ENCODE measurements at regions of chr10 and their contacts with region 1.

Region 1: GRCh38 chr10:22714479-22715289 is at the start of gene PIP4K2A:
- DNase-seq: peak; percentile 67
- ATAC-seq: peak; percentile 93
- H3K4me3 ChIP-seq: peak within 1 kb of the TSS; percentile 100
- H3K27ac ChIP-seq: peak within 1 kb of the TSS; percentile 93
- H3K4me1 ChIP-seq: no peaks in the 10 kb centered on the region; the same call in 1 of the 2 replicates
- H3K27me3 ChIP-seq: no peaks in the 10 kb centered on the region
- CTCF ChIP-seq: no peak
- POLR2A ChIP-seq: no peak
- RAD21 ChIP-seq: no peak
- total RNA-seq, gene PIP4K2A: 18.1 and 21.9 TPM in 2 replicates

Region 2: DNA sequence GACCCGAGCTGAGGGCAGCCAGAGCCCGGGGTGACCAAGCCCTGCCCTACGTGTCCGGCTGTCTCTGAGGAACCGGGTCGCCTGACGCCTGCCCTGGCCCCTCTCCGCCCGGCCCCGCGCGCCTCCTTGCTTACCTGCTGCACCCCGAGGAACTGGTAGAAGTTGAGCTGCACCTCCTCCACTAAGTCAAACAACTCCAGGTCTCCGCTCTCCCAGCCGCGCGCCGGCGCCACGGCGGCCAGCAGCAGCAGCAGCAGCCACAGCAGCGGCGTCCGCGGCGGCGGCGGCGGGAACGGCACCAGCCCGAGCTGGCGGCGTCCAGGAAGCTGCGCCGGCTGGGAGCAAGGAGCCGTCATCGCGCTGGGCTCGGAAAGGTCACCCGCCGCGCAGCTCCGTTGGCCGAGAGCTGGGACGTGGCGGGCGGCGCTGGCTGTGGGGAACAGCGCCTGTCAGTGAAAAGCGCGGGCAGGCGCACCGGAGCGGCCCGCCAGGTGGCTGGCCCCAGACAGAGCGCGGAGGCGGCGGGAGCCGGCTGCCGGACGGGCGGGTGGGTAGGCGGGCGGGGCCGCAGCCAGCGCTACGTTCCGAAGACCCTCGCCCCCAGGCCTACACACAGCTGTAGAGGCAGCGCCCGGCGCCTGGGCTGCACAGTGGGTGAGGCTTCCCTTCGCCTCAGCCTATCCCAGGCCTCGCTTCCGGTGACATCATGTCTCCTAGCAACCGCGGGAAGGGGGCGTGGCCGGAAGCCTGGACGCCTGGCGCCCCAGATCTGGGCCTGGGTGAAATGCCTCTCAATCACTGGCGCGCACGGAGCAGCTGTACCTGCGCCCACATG is 711.4 kb before region 1 on chr10 and contains the start of gene DNAJC1:
- CTCF ChIA-PET with region 1: no interaction called
- POLR2A ChIA-PET with region 1: no interaction called
- dilution Hi-C with region 1: no loop called
- in situ Hi-C with region 1: no loop called
- intact Hi-C with region 1: loop called (anchors 10 kb)
- DNase-seq: peak; percentile 90
- ATAC-seq: peak; percentile 99
- H3K4me3 ChIP-seq: peak within 1 kb of the TSS; percentile 69
- H3K27ac ChIP-seq: peak within 1 kb of the TSS; percentile 29
- H3K4me1 ChIP-seq: no peaks in the 10 kb centered on the region; the same call in 1 of the 2 replicates
- H3K27me3 ChIP-seq: no peaks in the 10 kb centered on the region; the same call in none of the 2 replicates
- CTCF ChIP-seq: no peak; the same call in 1 of the 2 replicates
- POLR2A ChIP-seq: peak; percentile 62
- RAD21 ChIP-seq: no peak
- total RNA-seq, gene DNAJC1: 13.3 and 22.8 TPM in 2 replicates

Region 3: DNA sequence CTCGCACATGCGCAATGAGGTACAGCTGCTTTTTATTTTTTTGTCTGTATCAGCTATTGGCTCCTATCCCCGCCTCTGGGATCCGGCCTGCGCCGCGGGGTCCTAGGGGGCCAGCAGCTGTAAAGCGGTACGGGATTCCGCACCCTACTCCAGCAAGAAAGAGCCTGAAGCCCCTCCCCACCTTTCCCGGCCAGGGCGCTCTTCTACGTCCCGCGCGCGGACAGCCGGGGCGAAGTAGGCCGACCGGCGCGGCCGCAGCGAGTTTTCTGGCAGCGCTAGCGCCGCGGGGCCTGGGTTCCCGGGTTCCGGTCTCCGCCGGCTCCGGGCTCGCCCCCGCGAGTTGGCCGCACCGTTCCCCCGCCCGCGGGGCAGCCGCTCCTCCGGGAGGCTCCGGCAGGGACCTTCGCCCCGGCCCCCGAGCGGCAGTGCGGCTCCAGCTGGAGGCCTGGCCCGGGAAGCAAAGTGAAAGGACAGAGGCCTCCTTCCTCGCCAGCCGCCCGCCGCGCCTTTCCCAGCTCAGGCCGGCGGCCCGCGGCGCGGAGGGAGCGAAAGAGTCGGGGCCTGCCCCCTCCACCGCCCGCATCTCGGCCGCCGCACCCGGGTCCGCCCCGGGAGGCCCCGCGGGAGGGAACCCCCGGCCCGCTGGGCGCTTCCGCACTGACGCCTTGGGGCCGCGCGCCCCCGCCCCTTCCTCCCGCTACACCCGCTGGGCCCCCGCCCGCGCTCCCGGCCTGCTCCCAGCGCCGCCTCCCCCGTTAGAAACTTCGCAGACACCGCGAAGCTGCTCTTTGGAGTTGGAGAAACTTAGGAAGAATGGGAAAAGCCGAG is 374.1 kb before region 1 on chr10:
- CTCF ChIA-PET with region 1: no interaction called
- POLR2A ChIA-PET with region 1: no interaction called
- dilution Hi-C with region 1: no loop called
- in situ Hi-C with region 1: no loop called
- intact Hi-C with region 1: loop called (anchors 5 kb)
- DNase-seq: peak; percentile 82
- ATAC-seq: peak; percentile 81
- H3K4me3 ChIP-seq: peak overlapping the region; percentile 74
- H3K27ac ChIP-seq: peak overlapping the region; percentile 89
- H3K4me1 ChIP-seq: no peaks in the 10 kb centered on the region
- H3K27me3 ChIP-seq: peaks cover 67% of the 10 kb centered on the region
- CTCF ChIP-seq: no peak
- POLR2A ChIP-seq: peak; percentile 50
- RAD21 ChIP-seq: no peak

Region 4: GRCh38 chr10:22550732-22551131 is 164.0 kb before region 1 on chr10:
- CTCF ChIA-PET with region 1: no interaction called
- POLR2A ChIA-PET with region 1: no interaction called
- dilution Hi-C with region 1: no loop called
- in situ Hi-C with region 1: no loop called
- intact Hi-C with region 1: loop called (anchors 5 kb)
- DNase-seq: peak; percentile 4
- ATAC-seq: no peak
- H3K4me3 ChIP-seq: no peak overlapping the region
- H3K27ac ChIP-seq: no peak overlapping the region
- H3K4me1 ChIP-seq: peaks cover 3% of the 10 kb centered on the region; the same call in 1 of the 2 replicates
- H3K27me3 ChIP-seq: no peaks in the 10 kb centered on the region
- CTCF ChIP-seq: peak; percentile 46
- POLR2A ChIP-seq: no peak
- RAD21 ChIP-seq: peak; percentile 24; the same call in 1 of the 2 replicates

Region 5: GRCh38 chr10:22597138-22597537 is 117.5 kb before region 1 on chr10:
- CTCF ChIA-PET with region 1: no interaction called
- POLR2A ChIA-PET with region 1: no interaction called
- dilution Hi-C with region 1: no loop called
- in situ Hi-C with region 1: no loop called
- intact Hi-C with region 1: loop called (anchors 5 kb)
- DNase-seq: peak; percentile 26
- ATAC-seq: peak; percentile 44
- H3K4me3 ChIP-seq: no peak overlapping the region
- H3K27ac ChIP-seq: no peak overlapping the region
- H3K4me1 ChIP-seq: peaks cover 15% of the 10 kb centered on the region
- H3K27me3 ChIP-seq: no peaks in the 10 kb centered on the region
- CTCF ChIP-seq: no peak
- POLR2A ChIP-seq: no peak
- RAD21 ChIP-seq: no peak

Region 6: DNA sequence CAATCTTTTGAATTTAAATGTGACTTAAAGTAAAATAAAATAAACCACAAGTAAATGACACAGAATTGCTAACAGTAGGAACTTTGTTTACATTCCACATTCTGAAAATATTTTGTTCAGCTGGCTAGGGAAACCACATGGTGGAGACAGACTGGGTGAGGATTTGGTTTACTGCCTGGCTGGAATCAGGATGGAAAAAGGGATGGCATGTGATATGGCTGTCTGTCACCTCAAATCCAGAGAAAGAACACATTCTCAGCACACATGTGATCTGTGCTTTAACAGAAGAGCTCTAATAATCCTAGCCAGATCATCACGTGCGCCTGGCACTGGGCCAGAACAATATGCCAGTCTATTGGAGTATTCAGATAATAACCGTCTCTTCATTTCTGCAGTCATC is 90.6 kb after region 1 on chr10:
- CTCF ChIA-PET with region 1: no interaction called
- POLR2A ChIA-PET with region 1: interaction called, 4 read pairs
- dilution Hi-C with region 1: no loop called
- in situ Hi-C with region 1: no loop called
- intact Hi-C with region 1: loop called (anchors 10 kb)
- DNase-seq: peak; percentile 58
- ATAC-seq: peak; percentile 82
- H3K4me3 ChIP-seq: no peak overlapping the region
- H3K27ac ChIP-seq: no peak overlapping the region
- H3K4me1 ChIP-seq: peaks cover 12% of the 10 kb centered on the region
- H3K27me3 ChIP-seq: no peaks in the 10 kb centered on the region
- CTCF ChIP-seq: peak; percentile 15; the same call in 1 of the 2 replicates
- POLR2A ChIP-seq: no peak
- RAD21 ChIP-seq: 0 out of 2 replicates have a peak, but pooled peaks have one; percentile 28

Measured in IMR-90 (cell line).